Cardiac septum (tissue), 1 donor: ENCODE measurements at regions of chr1 and their contacts with region 1.

Region 1: GRCh38 chr1:151443846-151444782 is 15.2 kb downstream of the POGZ start:
- DNase-seq: no peak

Region 2: DNA sequence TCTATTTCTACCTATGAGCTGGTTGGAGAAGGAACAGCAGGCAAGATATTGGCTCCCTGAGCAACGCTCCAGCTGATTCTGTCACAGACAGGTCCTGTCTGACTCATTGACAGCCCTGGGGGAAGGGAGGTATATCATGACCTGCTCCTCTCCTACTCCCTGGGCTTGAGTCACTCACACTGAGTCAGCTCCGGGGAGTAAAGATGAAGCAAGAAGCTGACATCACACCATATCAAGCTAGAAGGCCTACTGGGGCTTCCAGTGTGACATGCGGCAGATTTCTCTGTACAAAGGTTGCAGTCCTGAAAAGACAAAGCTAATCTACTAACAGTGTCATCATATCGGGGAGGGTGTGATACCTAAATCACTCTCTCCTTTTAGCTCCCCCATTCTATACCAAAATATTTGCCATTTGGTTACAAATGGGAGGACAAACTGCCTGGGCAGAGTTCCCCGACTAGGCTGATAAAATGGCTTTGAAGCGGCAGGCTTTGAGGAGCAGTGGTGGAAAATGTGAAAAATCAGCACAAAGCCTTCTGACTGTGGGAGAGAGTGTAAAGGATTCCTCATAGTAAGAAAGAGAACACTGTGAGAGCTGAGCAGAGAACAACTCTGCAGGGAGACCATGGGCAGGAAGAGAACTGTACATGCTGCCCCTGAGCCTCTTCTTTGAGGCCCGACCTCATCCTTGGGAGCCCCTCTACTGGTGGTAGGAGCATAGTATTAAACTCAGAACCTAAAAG is 132.4 kb before region 1 on chr1:
- intact Hi-C with region 1: no loop called
- DNase-seq: no peak

Region 3: GRCh38 chr1:151547119-151547899 is 103.2 kb after region 1 on chr1:
- intact Hi-C with region 1: loop called (anchors 5 kb)
- DNase-seq: no peak

Region 4: GRCh38 chr1:151594143-151594625 is 150.1 kb after region 1 on chr1:
- intact Hi-C with region 1: loop called (anchors 10 kb)
- DNase-seq: peak; percentile 91

Region 5: DNA sequence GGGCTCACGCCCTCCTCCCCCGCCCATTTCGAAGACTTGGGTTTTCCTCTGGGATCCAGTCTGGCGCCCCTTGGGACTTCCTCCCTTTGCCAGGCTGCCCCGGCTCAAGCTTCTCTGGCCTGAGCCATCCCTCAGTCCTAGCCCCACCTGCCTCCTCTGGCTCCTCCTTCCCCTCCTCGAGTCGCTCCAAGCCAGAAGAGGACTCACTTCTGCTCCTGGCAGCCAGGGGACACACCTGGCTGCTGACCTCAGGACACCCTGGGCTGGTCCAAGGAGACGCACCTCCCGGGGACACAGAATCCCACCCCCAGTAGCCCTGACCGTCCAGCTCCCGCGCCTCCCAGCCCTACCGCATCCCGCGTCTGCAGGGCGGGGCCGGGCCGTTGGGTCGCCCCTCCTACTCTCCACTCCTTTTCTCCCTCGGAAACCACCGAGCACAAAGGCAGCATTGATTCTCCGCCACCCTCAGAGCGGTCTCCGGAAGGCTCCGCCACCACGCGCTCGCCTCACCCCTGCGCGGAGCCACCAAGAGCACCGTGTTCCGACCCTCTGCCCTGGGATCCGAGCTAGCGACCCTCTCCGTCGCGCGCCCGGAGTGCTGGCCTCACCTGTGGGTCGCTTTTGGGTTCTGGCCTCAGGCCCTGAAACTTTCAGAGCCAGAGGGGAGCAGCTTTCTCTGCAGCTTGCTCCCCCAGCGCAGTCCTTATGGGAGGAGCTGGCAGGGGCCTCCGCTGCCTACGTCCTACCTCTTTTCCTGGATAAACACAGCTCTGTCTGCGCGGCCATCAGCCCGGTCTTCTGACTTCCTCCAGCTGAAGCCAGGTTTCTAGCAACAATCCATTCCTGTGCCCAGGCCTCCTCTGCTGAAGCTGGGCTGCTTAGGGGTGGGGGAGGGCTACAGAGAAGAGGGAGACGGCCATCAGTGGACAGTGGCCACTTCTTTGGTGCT is 395.6 kb after region 1 on chr1 and contains the start of gene C2CD4D:
- intact Hi-C with region 1: loop called (anchors 10 kb)
- DNase-seq: no peak
- total RNA-seq, gene C2CD4D: not detected